Calu3 (cell line): ENCODE measurements at regions of chr1 and their contacts with region 1.

Region 1: GRCh38 chr1:157138220-157139051 is at the start of gene ETV3:
- DNase-seq: peak; percentile 96
- H3K4me3 Mint-ChIP-seq: peak within 1 kb of the TSS; percentile 92
- H3K27ac Mint-ChIP-seq: peak within 1 kb of the TSS; percentile 98
- H3K4me1 Mint-ChIP-seq: peaks cover 19% of the 10 kb centered on the region
- H3K27me3 Mint-ChIP-seq: no peaks in the 10 kb centered on the region
- CTCF ChIP-seq: no peak
- total RNA-seq, gene ETV3: 39.7 and 50.0 TPM in 2 replicates

Region 2: GRCh38 chr1:157090196-157090647 is 48.2 kb before region 1 on chr1:
- CTCF ChIA-PET with region 1: interaction called, 15 read pairs
- intact Hi-C with region 1: loop called (anchors 5 kb)
- DNase-seq: peak; percentile 94
- H3K4me3 Mint-ChIP-seq: no peak overlapping the region
- H3K27ac Mint-ChIP-seq: no peak overlapping the region
- H3K4me1 Mint-ChIP-seq: peaks cover 12% of the 10 kb centered on the region
- H3K27me3 Mint-ChIP-seq: no peaks in the 10 kb centered on the region
- CTCF ChIP-seq: peak; percentile 95

Region 3: DNA sequence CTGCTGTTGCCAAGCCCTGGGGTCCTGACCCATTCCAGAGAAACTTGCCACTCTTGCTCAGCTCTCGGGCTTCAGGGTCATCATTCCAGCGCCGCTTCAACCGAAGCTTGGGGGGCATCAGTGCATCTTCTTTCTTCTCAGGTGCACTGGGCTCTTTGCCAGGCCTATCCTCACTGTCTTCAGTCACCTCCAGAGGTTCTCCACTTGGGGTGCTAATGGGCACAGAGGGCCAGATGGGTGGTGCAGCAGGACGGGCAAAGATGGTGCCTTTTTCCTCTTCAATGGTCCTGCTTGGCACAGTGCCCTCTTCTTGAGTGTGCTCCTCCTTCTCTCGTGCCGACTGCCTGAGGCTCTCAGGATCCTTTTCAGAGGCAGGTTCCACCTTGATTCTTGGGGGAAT is 13.6 kb before region 1 on chr1:
- CTCF ChIA-PET with region 1: no interaction called
- intact Hi-C with region 1: loop called (anchors 1 kb)
- DNase-seq: peak; percentile 21
- H3K4me3 Mint-ChIP-seq: no peak overlapping the region
- H3K27ac Mint-ChIP-seq: no peak overlapping the region
- H3K4me1 Mint-ChIP-seq: no peaks in the 10 kb centered on the region
- H3K27me3 Mint-ChIP-seq: no peaks in the 10 kb centered on the region
- CTCF ChIP-seq: no peak

Region 4: DNA sequence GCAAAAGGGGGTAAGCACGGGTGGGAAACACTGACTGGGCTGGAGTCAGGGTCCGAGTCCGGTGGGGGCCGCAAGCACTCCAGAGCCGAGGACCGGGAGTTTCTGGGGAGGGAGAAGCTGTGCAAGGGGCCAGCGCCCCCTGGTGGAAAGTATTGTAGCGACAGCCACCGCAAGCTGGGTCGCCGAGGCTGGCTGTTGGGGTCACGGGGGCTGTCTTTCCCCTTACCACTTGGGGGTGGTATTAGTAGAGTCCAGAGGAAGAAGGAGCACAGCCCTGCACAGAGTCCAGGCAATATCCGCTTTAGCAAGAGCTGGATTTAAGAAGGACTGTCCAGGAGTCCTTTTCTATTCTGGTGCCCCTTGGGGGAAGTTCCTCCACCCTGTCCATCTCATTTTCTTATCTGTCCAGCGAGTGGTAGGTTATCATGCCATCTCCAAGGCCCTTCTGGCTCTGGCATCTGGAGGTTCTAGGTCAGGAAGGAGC is 17.7 kb after region 1 on chr1:
- CTCF ChIA-PET with region 1: interaction called, 21 read pairs
- intact Hi-C with region 1: no loop called
- DNase-seq: peak; percentile 88
- H3K4me3 Mint-ChIP-seq: peak overlapping the region; percentile 40
- H3K27ac Mint-ChIP-seq: no peak overlapping the region
- H3K4me1 Mint-ChIP-seq: peaks cover 48% of the 10 kb centered on the region
- H3K27me3 Mint-ChIP-seq: peaks cover 37% of the 10 kb centered on the region
- CTCF ChIP-seq: peak; percentile 99